Dendritic cell treated with granulocyte-macrophage colony-stimulating factor and Interleukin-4, amounts not matched to agents 40 ng/mL and 50 ng/mL, for 4 days (primary cell): ENCODE measurements at regions of chr17 and their contacts with region 1.

Region 1: GRCh38 chr17:64773836-64774761 is 112.0 kb upstream of the SMURF2 start:
- H3K4me3 Mint-ChIP-seq: no peak overlapping the region
- H3K27ac Mint-ChIP-seq: peak overlapping the region; percentile 95
- H3K4me1 Mint-ChIP-seq: peaks cover 64% of the 10 kb centered on the region
- H3K27me3 Mint-ChIP-seq: no peaks in the 10 kb centered on the region

Region 2: GRCh38 chr17:64938925-64939474 is 164.9 kb after region 1 on chr17:
- intact Hi-C with region 1: loop called (anchors 10 kb)
- H3K4me3 Mint-ChIP-seq: peak overlapping the region; percentile 62
- H3K27ac Mint-ChIP-seq: peak overlapping the region; percentile 85
- H3K4me1 Mint-ChIP-seq: peaks cover 11% of the 10 kb centered on the region
- H3K27me3 Mint-ChIP-seq: no peaks in the 10 kb centered on the region